Mammary epithelial cell (primary cell): ENCODE measurements at regions of chr10 and their contacts with region 1.

Region 1: GRCh38 chr10:74738985-74739567 is 87.3 kb upstream of the KAT6B start:
- DNase-seq: no peak
- H3K4me3 ChIP-seq: no peak overlapping the region
- H3K27ac ChIP-seq: no peak overlapping the region
- H3K4me1 ChIP-seq: no peaks in the 10 kb centered on the region
- H3K27me3 ChIP-seq: no peaks in the 10 kb centered on the region
- CTCF ChIP-seq: peak in 1 of 2 donors; percentile 39

Region 2: GRCh38 chr10:74669210-74669609 is 69.9 kb before region 1 on chr10:
- CTCF ChIA-PET with region 1: no interaction called
- dilution Hi-C with region 1: loop called (anchors 5 kb)
- in situ Hi-C with region 1: no loop called
- intact Hi-C with region 1: no loop called
- DNase-seq: no peak
- H3K4me3 ChIP-seq: no peak overlapping the region
- H3K27ac ChIP-seq: no peak overlapping the region
- H3K4me1 ChIP-seq: no peaks in the 10 kb centered on the region
- H3K27me3 ChIP-seq: no peaks in the 10 kb centered on the region
- CTCF ChIP-seq: no peak

Region 3: DNA sequence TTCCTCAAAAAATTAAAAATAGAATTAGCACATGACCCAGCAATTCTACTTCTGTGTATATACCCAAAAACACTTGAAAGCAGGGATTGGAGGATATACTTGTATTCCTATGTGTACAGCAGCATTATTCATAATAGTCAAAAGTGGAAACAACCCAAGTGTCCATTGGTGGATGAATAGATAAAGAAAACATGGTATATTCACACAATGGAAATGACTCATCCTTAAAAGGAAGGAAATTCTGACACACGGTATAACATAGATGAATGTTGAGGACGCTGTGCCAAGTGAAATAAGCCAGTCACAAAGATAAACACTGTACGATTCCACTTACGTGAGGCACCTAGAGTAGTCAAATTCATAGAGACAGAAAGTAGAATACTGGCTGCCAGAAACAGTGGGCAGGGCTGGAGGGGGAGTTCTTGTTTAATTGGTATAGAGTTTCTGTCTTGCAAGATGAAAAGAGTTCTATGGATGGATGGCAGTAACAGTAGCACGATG is 60.7 kb after region 1 on chr10:
- CTCF ChIA-PET with region 1: no interaction called
- dilution Hi-C with region 1: loop called (anchors 10 kb)
- in situ Hi-C with region 1: no loop called
- intact Hi-C with region 1: no loop called
- DNase-seq: peak; percentile 94
- H3K4me3 ChIP-seq: no peak overlapping the region
- H3K27ac ChIP-seq: no peak overlapping the region
- H3K4me1 ChIP-seq: peaks cover 5% of the 10 kb centered on the region
- H3K27me3 ChIP-seq: no peaks in the 10 kb centered on the region
- CTCF ChIP-seq: no peak

Region 4: GRCh38 chr10:74826142-74827044 is 87.3 kb after region 1 on chr10 and contains the start of gene KAT6B:
- CTCF ChIA-PET with region 1: no interaction called
- dilution Hi-C with region 1: no loop called
- in situ Hi-C with region 1: no loop called
- intact Hi-C with region 1: no loop called
- DNase-seq: peak; percentile 100
- H3K4me3 ChIP-seq: peak within 1 kb of the TSS; percentile 81 to 95 (median 84)
- H3K27ac ChIP-seq: peak within 1 kb of the TSS; percentile 86
- H3K4me1 ChIP-seq: peaks cover 6% of the 10 kb centered on the region
- H3K27me3 ChIP-seq: no peaks in the 10 kb centered on the region
- CTCF ChIP-seq: peak in 1 of 2 donors; percentile 39
- total RNA-seq, gene KAT6B: 12.1 to 22.2 TPM

Region 5: DNA sequence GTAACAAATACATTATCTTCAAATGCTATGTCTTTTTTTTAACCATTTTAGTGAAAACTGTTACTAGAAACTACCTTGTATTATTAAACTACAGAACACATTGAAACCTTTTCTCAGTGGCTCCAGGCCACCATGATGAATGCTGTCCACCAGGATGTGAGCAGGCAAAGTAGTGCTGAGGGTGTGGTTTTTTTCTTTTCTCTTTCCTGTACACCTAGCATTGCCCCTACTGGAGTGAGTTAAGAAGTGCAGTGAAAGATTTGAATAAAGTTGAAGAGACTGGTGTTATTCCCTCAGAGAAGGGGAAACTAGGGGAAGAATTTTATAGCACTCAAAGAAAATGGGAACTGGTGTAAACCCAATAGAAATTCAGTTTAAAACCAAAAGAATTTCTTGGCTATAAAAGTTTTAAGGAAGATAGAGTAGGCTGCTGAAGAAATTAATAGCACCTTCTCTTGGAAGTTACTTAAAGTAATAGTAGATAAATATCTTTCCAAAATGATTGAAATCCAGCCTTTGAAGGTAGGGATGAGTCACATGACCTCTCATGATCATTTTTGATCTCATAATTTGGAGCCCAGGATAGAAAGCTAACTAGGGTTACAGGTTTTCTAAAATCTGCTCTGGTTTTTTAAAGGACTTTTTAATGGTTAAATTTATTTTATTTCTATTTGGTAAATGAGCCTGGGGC is 252.5 kb after region 1 on chr10:
- CTCF ChIA-PET with region 1: no interaction called
- dilution Hi-C with region 1: loop called (anchors 10 kb)
- in situ Hi-C with region 1: no loop called
- intact Hi-C with region 1: no loop called
- DNase-seq: peak; percentile 53
- H3K4me3 ChIP-seq: no peak overlapping the region
- H3K27ac ChIP-seq: no peak overlapping the region
- H3K4me1 ChIP-seq: no peaks in the 10 kb centered on the region
- H3K27me3 ChIP-seq: no peaks in the 10 kb centered on the region
- CTCF ChIP-seq: peak; percentile 49 to 59

Region 6: DNA sequence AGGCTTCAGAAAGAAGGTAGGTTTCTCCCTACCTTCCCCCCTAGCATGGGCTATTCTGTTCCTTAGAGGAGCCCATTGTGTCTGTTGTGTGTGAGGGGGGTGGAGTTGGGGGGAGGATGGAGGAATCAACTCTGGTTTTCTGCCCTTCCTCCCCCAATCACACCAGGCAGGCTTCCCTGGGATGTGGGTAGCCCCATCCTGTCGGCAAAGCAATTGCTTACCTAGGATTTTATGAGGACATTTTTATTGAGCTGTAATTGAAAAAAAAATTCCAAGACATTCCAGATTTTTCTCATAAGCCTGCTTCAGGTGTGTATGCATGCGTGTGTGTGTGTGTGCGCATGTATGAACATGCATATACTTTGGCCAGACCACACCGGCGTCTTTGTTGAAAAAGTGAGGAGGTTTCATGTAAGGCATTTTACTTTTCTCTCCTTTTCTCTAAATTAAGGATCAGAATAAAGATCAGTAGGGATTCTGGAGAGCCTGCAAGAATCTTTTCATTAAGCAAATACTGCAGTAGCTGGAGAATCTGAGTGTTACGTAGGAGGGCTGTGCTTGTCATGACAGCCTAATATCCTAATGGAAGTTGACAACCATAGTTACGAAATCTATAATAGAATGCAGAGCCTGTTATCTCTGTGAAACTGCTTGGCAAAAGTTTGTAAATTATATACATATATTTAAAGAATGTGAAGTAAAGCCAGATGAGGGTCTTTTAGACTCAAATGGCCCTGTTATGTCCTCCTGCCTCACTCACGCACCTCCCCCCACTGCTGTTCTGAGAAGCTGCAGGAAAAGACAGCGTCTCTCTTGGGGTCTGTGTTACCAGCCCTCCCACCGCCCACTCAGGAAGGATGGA is 345.1 kb after region 1 on chr10:
- CTCF ChIA-PET with region 1: no interaction called
- dilution Hi-C with region 1: loop called (anchors 10 kb)
- in situ Hi-C with region 1: no loop called
- intact Hi-C with region 1: no loop called
- DNase-seq: no peak
- H3K4me3 ChIP-seq: no peak overlapping the region
- H3K27ac ChIP-seq: no peak overlapping the region
- H3K4me1 ChIP-seq: peaks cover 6% of the 10 kb centered on the region
- H3K27me3 ChIP-seq: no peaks in the 10 kb centered on the region
- CTCF ChIP-seq: no peak